ENCODE measurements at regions of chr10 and their contacts with region 1.

Region 1: DNA sequence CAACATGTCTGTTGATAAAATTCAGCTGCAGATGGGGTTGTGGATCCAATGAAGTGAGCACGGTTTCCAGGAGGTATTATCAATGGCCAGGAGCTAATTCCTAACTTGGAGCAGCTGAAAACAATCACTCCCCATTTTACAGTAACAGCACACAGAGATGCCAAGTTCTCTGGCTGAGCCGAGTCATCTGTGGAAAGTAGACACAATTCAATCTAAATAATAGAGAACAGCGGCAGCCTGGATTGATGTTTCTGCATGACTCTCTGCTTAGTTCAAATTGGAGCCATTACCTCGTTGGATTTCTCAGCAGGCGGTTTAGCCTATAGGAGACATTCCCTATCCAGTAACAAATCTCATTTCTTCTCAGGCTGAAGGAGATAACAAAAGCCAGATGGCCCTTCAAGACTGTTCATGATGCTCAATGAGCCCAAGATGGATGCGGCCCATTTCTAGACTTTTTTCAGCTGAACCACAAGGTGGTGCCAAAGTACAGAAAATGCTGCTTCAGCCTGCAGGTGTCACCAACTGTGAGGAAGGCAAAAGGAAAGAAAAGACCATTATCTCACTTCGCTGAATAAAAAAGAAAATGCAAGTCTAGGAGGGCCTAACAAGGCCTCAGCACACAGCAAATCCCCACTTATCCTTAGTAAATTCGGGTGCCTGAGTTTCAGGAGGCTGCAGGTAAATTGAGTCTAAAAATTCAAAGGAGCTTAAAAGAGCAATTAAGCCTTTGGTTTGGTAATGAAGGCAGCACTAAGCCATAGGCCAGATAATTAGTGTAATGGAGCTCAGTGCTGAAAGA is 83.7 kb downstream of the SLC16A9 start:
- DNase-seq: peak; percentile 43
- H3K4me3 ChIP-seq: no peak overlapping the region
- H3K27ac ChIP-seq: no peak overlapping the region
- H3K4me1 ChIP-seq: no peaks in the 10 kb centered on the region
- H3K27me3 ChIP-seq: no peaks in the 10 kb centered on the region
- CTCF ChIP-seq: peak; percentile 79 to 80

Region 2: GRCh38 chr10:58952747-58953466 is 673.0 kb before region 1 on chr10:
- CTCF ChIA-PET with region 1: no interaction called
- dilution Hi-C with region 1: no loop called
- in situ Hi-C with region 1: no loop called
- intact Hi-C with region 1: loop called (anchors 2 kb)
- DNase-seq: peak; percentile 35
- H3K4me3 ChIP-seq: no peak overlapping the region
- H3K27ac ChIP-seq: no peak overlapping the region
- H3K4me1 ChIP-seq: peaks cover 21% of the 10 kb centered on the region
- H3K27me3 ChIP-seq: no peaks in the 10 kb centered on the region
- CTCF ChIP-seq: peak; percentile 84

Region 3: DNA sequence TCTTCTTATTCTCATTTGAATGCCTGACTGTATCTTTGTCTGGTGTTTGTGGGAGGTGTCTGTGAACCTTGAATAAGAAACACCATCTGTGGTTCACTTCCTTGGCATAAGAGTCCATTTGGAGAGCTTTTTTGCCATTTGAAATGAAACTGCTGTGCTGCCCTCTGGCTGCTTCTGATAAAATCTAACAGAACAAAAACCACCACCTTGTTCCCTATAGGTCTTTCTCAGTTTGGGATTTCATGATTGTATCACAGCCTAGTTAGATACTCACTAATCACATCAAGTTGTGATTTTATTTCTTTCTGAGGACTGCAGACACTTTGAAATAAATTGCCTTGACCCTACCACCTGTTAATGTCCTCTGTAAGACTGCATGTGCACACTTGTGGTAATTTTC is 160.8 kb before region 1 on chr10:
- CTCF ChIA-PET with region 1: no interaction called
- dilution Hi-C with region 1: no loop called
- in situ Hi-C with region 1: no loop called
- intact Hi-C with region 1: loop called (anchors 5 kb)
- DNase-seq: peak; percentile 27
- H3K4me3 ChIP-seq: no peak overlapping the region
- H3K27ac ChIP-seq: no peak overlapping the region
- H3K4me1 ChIP-seq: no peaks in the 10 kb centered on the region
- H3K27me3 ChIP-seq: no peaks in the 10 kb centered on the region
- CTCF ChIP-seq: peak; percentile 18 to 62

Region 4: GRCh38 chr10:59817773-59818172 is 191.9 kb after region 1 on chr10:
- CTCF ChIA-PET with region 1: no interaction called
- dilution Hi-C with region 1: no loop called
- in situ Hi-C with region 1: loop called in 1 of 2 experiments (anchors 10 kb)
- intact Hi-C with region 1: no loop called
- DNase-seq: no peak
- H3K4me3 ChIP-seq: no peak overlapping the region
- H3K27ac ChIP-seq: no peak overlapping the region
- H3K4me1 ChIP-seq: peaks cover 5% of the 10 kb centered on the region
- H3K27me3 ChIP-seq: no peaks in the 10 kb centered on the region
- CTCF ChIP-seq: no peak

Region 5: DNA sequence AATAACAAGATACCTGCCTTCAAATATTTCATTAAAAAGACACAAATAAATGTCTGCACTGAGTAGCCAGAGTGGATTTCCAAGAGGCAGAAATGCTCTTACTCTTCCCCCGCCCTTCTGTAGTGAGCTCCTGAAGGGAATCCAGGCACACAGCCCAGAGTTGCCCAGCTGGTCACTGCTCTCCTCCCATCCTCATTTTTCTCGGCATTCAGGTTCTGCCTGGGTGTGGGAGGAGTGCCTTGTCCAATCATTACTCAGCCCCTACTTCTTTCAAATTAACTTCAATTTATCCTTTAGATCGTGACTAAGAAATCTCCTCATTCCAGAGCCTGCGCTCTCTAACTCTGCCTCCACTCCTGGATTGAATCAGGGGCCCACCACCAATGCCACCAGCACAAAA is 268.2 kb after region 1 on chr10:
- CTCF ChIA-PET with region 1: no interaction called
- dilution Hi-C with region 1: no loop called
- in situ Hi-C with region 1: no loop called
- intact Hi-C with region 1: no loop called
- DNase-seq: peak; percentile 85
- H3K4me3 ChIP-seq: no peak overlapping the region
- H3K27ac ChIP-seq: peak overlapping the region; percentile 34
- H3K4me1 ChIP-seq: peaks cover 30% of the 10 kb centered on the region
- H3K27me3 ChIP-seq: no peaks in the 10 kb centered on the region
- CTCF ChIP-seq: no peak

Region 6: DNA sequence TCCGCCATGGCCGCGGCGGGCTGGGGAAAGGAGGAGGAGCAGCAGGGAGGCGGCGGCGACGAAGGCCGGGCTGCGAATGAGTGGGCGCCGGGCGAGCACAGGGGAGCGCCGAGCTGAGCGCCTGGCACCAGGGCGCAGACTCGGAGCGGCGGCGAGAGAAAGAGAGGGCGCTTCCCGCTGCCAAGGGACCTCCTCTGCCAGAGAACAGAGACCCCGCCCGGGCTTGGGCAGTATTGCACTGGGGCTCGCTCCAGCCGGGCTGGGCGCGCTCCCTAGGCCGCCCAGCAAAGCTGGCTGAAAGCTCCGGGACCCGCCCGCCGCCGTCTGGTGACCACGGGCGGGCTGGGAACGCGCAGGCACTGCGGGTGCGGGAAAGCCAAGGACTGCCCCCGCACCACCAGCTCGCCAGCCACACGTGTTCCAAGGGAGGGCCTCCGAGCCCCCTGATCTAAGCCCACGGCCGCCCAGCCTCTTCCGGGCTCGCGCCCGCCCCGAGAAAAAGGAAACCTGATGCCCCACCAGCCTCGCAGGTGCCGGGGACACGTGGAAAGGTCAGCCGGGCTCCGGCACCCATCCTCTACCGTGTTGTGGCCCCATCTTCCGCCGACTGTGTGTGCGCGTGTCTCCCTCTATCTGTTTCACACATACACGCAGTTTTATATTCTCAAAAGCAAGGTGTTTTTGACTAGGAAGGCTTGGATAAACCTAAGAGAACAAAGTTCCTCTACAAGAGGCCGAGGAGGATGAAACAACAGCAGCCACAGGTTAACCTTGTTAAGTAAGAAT is 280.7 kb after region 1 on chr10 and contains the start of gene CCDC6:
- CTCF ChIA-PET with region 1: interaction called, 3 read pairs
- dilution Hi-C with region 1: no loop called
- in situ Hi-C with region 1: no loop called
- intact Hi-C with region 1: loop called (anchors 1 kb)
- DNase-seq: peak; percentile 92
- H3K4me3 ChIP-seq: peak within 1 kb of the TSS; percentile 86 to 97 (median 97)
- H3K27ac ChIP-seq: peak within 1 kb of the TSS; percentile 98
- H3K4me1 ChIP-seq: peaks cover 48% of the 10 kb centered on the region
- H3K27me3 ChIP-seq: no peaks in the 10 kb centered on the region
- CTCF ChIP-seq: peak; percentile 49 to 76
- total RNA-seq, gene CCDC6: 52.4 to 76.0 TPM

Region 7: DNA sequence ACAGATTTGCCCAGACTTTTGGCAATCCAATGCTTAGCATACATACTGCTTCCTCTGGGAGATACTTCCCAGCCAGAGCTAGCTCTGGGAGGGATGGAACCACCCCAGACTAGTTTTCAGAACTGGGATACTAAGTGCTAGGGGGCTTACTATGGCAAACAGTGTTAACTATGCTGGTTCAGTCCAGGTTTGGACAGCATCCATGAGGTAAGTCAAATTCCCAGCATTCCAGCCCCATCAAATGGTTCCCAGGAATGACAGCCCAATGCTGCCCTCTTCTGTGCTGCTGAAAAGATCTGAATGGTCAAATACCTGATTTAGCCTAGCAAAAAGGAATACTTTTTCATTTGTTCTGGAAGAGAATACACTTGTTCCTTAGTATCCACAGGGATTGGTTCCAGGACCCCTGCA is 422.2 kb after region 1 on chr10:
- CTCF ChIA-PET with region 1: interaction called, 6 read pairs
- dilution Hi-C with region 1: loop called (anchors 25 kb)
- in situ Hi-C with region 1: loop called in 1 of 2 experiments (anchors 10 kb)
- intact Hi-C with region 1: loop called (anchors 5 kb)
- DNase-seq: peak; percentile 18
- H3K4me3 ChIP-seq: no peak overlapping the region
- H3K27ac ChIP-seq: no peak overlapping the region
- H3K4me1 ChIP-seq: no peaks in the 10 kb centered on the region
- H3K27me3 ChIP-seq: no peaks in the 10 kb centered on the region
- CTCF ChIP-seq: peak; percentile 39 to 48

Region 8: GRCh38 chr10:60224066-60224705 is 598.3 kb after region 1 on chr10:
- CTCF ChIA-PET with region 1: no interaction called
- dilution Hi-C with region 1: no loop called
- in situ Hi-C with region 1: no loop called
- intact Hi-C with region 1: no loop called
- DNase-seq: no peak
- H3K4me3 ChIP-seq: no peak overlapping the region
- H3K27ac ChIP-seq: no peak overlapping the region
- H3K4me1 ChIP-seq: no peaks in the 10 kb centered on the region
- H3K27me3 ChIP-seq: no peaks in the 10 kb centered on the region
- CTCF ChIP-seq: no peak

Region 9: GRCh38 chr10:60434418-60435046 is 808.6 kb after region 1 on chr10:
- CTCF ChIA-PET with region 1: no interaction called
- dilution Hi-C with region 1: no loop called
- in situ Hi-C with region 1: no loop called
- intact Hi-C with region 1: loop called (anchors 1 kb)
- DNase-seq: peak; percentile 32
- H3K4me3 ChIP-seq: no peak overlapping the region
- H3K27ac ChIP-seq: no peak overlapping the region
- H3K4me1 ChIP-seq: peaks cover 16% of the 10 kb centered on the region
- H3K27me3 ChIP-seq: no peaks in the 10 kb centered on the region
- CTCF ChIP-seq: peak; percentile 54 to 68